ENCODE measurements at regions of chr5 and their contacts with region 1.

Region 1: DNA sequence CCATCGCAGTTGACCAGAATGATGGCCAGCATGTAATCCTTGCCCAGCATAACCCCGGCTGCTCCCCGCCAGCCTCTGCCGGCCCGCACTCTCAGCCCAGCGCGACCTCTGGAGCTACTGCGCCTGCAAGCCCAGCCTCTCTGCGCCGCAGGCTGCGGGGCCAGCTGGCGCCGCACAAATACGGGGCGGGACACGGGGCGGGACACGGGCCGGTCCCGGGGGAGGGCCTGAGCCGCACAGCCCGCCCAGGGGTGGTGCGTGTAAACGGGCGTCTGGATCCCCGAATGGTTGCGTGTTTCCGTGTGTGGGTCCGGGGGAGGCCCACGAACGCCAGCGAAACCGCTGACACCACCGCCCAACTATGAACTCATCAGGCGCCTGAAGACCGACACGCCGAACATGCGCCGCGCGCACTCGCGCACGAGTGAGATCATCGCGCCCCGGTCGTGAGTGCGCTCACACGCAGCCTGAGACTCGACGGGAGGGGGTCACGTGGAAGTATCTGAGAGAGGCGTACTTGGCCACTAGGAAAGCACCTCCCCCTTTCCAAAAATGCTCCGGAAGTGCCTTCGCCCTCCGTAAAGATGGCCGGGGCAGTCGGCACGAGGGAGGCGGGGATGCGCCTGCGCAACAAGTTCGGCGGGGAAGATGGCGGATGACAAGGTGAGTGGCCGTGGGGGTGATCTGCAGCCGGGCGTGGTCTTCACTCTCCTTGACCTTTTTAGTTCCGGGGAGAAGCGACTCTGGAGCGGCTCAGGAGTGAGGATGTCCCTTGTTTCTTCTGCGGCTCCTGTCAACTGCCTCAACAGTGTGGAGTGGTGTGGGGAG is at the starts of genes APBB3 and SLC35A4:
- DNase-seq: peak; percentile 99
- H3K4me3 Mint-ChIP-seq: peak within 1 kb of the TSS; percentile 84
- H3K27ac Mint-ChIP-seq: peak within 1 kb of the TSS; percentile 95
- H3K4me1 Mint-ChIP-seq: peaks cover 22% of the 10 kb centered on the region
- H3K27me3 Mint-ChIP-seq: no peaks in the 10 kb centered on the region
- CTCF ChIP-seq: no peak
- total RNA-seq, gene APBB3: 22.7 and 28.1 TPM in 2 replicates
- total RNA-seq, gene SLC35A4: 84.0 and 119 TPM in 2 replicates

Region 2: DNA sequence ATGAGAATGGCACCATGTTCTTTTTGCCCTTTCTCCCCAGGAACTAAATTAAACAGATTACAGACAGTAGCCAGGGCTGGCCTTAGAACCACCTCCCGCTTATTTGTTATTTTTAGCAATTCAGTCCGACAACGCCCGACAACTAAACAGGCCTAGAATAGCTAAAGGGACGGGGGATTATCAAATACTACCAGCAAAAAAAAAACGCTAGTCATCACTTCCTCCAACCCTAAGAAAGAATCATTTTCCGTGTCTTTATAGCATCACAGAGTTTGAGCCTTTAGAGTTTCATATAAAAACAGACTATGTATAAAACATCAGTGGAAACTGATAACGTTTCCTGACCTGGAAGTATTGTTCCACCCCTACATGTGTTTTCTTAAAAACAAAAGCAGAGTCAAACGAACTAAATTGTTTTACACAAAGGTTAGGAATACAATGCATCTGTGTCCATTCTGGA is 296.8 kb before region 1 on chr5:
- CTCF ChIA-PET with region 1: no interaction called
- POLR2A ChIA-PET with region 1: no interaction called
- intact Hi-C with region 1: no loop called
- DNase-seq: no peak
- H3K4me3 Mint-ChIP-seq: no peak overlapping the region
- H3K27ac Mint-ChIP-seq: no peak overlapping the region
- H3K4me1 Mint-ChIP-seq: peaks cover 11% of the 10 kb centered on the region
- H3K27me3 Mint-ChIP-seq: no peaks in the 10 kb centered on the region
- CTCF ChIP-seq: no peak

Region 3: GRCh38 chr5:140547508-140548299 is 16.7 kb before region 1 on chr5 and contains the start of gene EIF4EBP3:
- CTCF ChIA-PET with region 1: interaction called, 27 read pairs
- POLR2A ChIA-PET with region 1: interaction called, 188 read pairs
- intact Hi-C with region 1: no loop called
- DNase-seq: peak; percentile 97
- H3K4me3 Mint-ChIP-seq: peak within 1 kb of the TSS; percentile 77
- H3K27ac Mint-ChIP-seq: peak within 1 kb of the TSS; percentile 80
- H3K4me1 Mint-ChIP-seq: peaks cover 27% of the 10 kb centered on the region
- H3K27me3 Mint-ChIP-seq: no peaks in the 10 kb centered on the region
- CTCF ChIP-seq: peak; percentile 74
- total RNA-seq, gene EIF4EBP3: 25.3 and 35.3 TPM in 2 replicates

Region 4: GRCh38 chr5:140595538-140596300 is 31.3 kb after region 1 on chr5:
- CTCF ChIA-PET with region 1: no interaction called
- POLR2A ChIA-PET with region 1: interaction called, 19 read pairs
- intact Hi-C with region 1: no loop called
- DNase-seq: peak; percentile 84
- H3K4me3 Mint-ChIP-seq: no peak overlapping the region
- H3K27ac Mint-ChIP-seq: no peak overlapping the region
- H3K4me1 Mint-ChIP-seq: peaks cover 21% of the 10 kb centered on the region
- H3K27me3 Mint-ChIP-seq: no peaks in the 10 kb centered on the region
- CTCF ChIP-seq: no peak

Region 5: DNA sequence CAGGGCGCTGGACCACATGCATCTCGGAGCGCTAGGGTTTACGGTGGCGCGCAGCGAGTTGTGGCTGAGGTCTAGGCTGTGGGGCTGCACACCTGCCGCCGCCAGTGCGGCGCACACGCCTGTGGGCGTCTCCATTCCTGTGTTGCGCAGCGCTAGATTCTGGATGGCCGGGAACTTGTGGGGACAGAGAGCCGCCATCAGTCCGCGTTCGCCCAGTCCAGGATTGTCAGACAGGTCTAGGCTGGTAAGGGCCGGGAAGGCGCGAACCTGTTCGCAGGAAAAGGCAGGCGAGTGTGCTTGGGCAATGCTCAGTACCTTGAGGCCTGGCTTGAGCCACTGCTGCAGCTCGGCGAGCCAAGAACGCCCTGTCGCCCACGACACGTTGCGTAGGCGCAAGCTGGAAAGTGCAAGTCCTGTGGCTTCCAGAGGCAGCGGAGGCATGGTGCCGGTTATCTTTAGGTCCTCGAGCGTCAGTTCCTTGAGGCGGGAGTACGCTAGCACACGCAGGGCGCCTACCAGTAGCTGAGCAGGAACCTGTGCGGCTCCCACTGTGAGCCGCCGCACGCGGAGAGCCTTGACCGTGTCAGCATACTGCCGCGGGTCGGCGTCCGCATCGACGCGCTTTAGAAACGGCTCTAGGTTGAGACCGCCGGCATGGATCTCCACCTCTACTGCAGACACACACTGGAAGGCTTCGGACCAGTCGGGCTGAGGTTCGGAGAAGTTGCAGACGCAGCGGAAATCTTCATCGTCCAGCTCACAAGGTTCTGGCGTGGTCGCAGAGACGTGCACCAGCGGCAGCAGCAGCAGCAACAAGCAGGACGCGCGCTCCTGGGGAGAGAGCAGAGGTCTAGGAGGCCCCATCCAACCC is 68.0 kb after region 1 on chr5:
- CTCF ChIA-PET with region 1: interaction called, 20 read pairs
- POLR2A ChIA-PET with region 1: interaction called, 143 read pairs
- intact Hi-C with region 1: no loop called
- DNase-seq: peak; percentile 85
- H3K4me3 Mint-ChIP-seq: peak overlapping the region; percentile 68
- H3K27ac Mint-ChIP-seq: no peak overlapping the region
- H3K4me1 Mint-ChIP-seq: peaks cover 30% of the 10 kb centered on the region
- H3K27me3 Mint-ChIP-seq: no peaks in the 10 kb centered on the region
- CTCF ChIP-seq: no peak

Measured in MCF 10A (cell line).